GM12878 (cell line): ENCODE measurements at regions of chr6 and their contacts with region 1.

Region 1: DNA sequence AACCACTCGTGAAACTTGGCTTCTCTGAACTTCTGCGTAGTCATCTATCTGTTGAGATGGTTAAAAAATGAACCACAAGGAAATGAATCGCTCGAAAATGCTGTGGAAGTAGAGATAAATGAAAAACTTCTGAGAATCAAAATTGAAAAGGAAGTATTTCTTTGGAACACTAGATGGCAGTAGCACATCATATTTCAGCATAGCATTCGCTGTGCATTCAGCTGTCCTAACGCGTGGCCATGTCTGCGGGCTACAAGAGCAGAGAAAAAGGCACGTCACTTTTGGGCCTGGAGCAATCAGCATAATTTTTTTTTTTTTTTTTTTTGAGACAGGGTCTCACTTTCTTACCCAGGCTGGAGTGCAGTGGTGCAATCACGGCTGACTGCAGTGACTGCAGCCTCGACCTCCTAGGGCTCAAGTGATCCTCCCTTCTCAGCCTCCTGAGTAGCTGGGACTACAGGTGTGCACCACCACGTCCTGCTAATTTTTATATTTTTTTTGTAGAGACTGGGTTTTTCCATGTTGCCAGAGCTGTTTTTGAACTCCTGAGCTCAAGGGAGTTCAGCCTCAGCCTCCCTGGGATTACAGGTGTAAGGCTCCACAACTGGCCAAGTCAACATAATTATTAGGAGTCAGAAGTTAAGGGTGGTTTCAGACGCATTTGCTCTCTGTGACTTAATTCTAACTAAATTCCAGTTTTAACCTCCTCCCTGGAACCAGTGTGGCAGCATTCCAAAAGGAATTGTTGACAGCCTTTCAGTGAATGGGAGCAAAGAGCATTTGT is 8.8 kb upstream of the PERP start:
- DNase-seq: peak; percentile 33
- ATAC-seq: peak; percentile 97
- H3K4me3 ChIP-seq: no peak overlapping the region
- H3K27ac ChIP-seq: no peak overlapping the region
- H3K4me1 ChIP-seq: no peaks in the 10 kb centered on the region
- H3K27me3 ChIP-seq: peaks cover 0 to 2% of the 10 kb centered on the region in 2 experiments; a peak in 1 of 4 replicates
- CTCF ChIP-seq: peak; percentile 53 to 86 (median 64); a peak in 5 of 6 replicates
- EP300 ChIP-seq: no peak
- POLR2A ChIP-seq: no peak
- RAD21 ChIP-seq: peak; percentile 82

Region 2: GRCh38 chr6:138012682-138013081 is 103.4 kb before region 1 on chr6:
- CTCF ChIA-PET with region 1: interaction called, 19 read pairs
- POLR2A ChIA-PET with region 1: no interaction called
- RAD21 ChIA-PET with region 1: interaction called, 5 read pairs
- SMC1A ChIA-PET with region 1: interaction called, 3 read pairs
- in situ Hi-C with region 1: no loop called
- intact Hi-C with region 1: no loop called
- DNase-seq: no peak
- ATAC-seq: no peak
- H3K4me3 ChIP-seq: no peak overlapping the region
- H3K27ac ChIP-seq: no peak overlapping the region
- H3K4me1 ChIP-seq: no peaks in the 10 kb centered on the region
- H3K27me3 ChIP-seq: no peaks in the 10 kb centered on the region
- CTCF ChIP-seq: no peak
- EP300 ChIP-seq: no peak
- POLR2A ChIP-seq: no peak
- RAD21 ChIP-seq: no peak

Region 3: DNA sequence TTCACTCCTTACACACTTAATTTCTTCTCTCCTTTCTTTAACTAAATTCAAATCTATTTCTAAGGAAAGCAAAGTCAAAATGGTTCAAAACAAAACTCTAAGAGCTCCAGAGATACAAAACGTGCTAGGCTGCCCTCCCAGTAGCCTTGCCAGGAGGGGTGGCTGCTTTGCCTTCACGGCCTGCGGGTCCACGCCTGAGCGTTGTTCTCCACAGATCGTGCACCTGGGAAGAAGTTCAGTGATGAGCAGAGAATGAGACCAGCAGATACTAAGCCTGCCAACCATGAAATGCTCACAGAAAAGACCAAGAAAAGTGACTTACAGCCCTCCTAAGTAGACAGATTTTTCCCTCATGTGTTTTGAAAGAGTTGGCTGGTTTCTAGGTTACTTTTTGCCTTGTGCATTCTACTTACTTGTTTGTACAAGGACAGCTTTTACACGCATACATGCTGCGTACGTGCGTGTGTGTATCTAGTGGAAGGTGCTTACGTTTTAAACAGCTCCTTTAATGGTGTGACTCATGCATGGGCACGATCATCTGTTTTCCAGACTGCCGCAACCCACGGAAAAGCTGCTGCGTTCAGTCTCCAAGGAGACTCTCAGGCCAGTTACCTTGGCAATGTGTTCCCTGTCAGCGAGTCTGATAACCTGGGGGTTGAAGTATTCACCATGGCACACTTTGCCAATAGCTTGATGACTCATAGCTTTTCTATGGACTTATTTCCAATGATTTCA is 134.6 kb after region 1 on chr6:
- CTCF ChIA-PET with region 1: no interaction called
- POLR2A ChIA-PET with region 1: no interaction called
- RAD21 ChIA-PET with region 1: no interaction called
- SMC1A ChIA-PET with region 1: no interaction called
- in situ Hi-C with region 1: no loop called
- intact Hi-C with region 1: no loop called
- DNase-seq: no peak
- ATAC-seq: no peak
- H3K4me3 ChIP-seq: no peak overlapping the region
- H3K27ac ChIP-seq: no peak overlapping the region
- H3K4me1 ChIP-seq: no peaks in the 10 kb centered on the region
- H3K27me3 ChIP-seq: peaks cover 0 to 2% of the 10 kb centered on the region in 2 experiments; a peak in 1 of 4 replicates
- CTCF ChIP-seq: no peak
- EP300 ChIP-seq: no peak
- POLR2A ChIP-seq: no peak
- RAD21 ChIP-seq: no peak

Region 4: DNA sequence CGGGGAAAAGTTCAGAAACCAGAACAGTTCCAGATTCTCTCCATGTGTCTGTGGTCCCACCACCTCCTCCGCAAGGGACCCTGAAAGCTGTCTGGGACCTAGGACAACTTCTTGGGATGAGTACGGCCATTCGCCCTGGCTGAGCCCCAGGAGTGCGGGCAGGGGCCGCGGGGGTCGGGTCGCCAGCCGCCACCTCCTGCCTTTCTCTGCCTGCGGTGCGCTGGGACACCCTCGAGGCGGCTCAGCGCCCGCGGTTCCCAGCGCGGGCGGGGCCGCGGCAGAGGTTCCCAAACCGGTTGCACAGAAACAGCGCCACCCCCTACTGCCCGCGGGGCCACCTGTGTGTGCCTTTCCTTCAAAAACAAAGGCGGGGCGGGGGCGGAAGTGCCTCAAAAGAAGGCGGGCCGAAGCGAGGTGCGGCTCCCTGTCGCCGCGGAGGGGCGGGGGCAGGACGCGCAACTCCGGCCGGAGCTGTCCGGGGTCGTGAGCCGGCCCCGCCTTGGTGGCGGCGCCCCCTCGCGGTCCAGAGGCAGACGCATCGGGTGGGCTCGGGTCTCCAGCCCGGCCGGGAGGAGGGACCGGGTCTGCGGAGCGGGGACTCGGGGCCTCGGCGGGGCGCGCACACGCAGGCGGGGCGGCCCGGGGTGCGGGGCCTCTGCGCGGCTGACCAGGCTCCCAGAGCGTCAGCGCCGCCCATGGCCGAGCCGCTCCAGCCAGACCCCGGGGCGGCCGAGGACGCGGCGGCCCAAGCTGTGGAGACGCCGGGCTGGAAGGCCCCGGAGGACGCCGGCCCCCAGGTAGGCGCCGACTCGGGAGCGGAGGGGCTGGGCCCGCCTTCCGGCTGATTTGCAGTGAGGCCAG is 288.0 kb after region 1 on chr6 and contains the start of gene HEBP2:
- CTCF ChIA-PET with region 1: interaction called, 24 read pairs
- POLR2A ChIA-PET with region 1: no interaction called
- RAD21 ChIA-PET with region 1: interaction called, 5 read pairs
- SMC1A ChIA-PET with region 1: interaction called, 5 read pairs
- in situ Hi-C with region 1: no loop called
- intact Hi-C with region 1: loop called (anchors 1 kb)
- DNase-seq: peak; percentile 65
- ATAC-seq: peak; percentile 91
- H3K4me3 ChIP-seq: peak within 1 kb of the TSS; percentile 87
- H3K27ac ChIP-seq: peak within 1 kb of the TSS; percentile 61
- H3K4me1 ChIP-seq: peaks cover 3% of the 10 kb centered on the region; the same call in 1 of the 2 replicates
- H3K27me3 ChIP-seq: no peaks in the 10 kb centered on the region
- CTCF ChIP-seq: peak; percentile 39 to 44 (median 40); a peak in 5 of 6 replicates
- EP300 ChIP-seq: no peak
- POLR2A ChIP-seq: peak; percentile 78
- RAD21 ChIP-seq: peak; percentile 34; the same call in 1 of the 2 replicates
- polyA plus RNA-seq, gene HEBP2: 3.8 to 17.2 TPM

Region 5: DNA sequence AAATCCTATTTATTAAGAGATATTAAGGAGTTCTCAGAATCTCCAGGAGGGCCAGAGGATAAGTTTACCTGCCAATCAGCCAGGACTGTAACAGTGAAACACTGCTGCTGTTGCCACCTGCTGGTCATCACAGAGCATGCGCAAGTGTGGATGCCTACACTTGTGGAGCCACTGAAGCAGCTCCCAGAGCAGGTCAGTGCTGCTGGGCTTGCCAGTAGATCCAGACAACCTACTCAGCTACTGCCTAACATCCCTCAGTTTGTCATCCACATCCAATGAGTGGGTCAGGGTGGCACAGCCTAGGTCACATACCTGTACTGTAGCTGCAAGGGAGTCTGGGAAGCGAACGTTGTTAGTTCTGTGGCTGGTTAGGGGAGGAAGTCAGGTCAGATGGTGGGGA is 401.6 kb after region 1 on chr6:
- CTCF ChIA-PET with region 1: interaction called, 97 read pairs
- POLR2A ChIA-PET with region 1: no interaction called
- RAD21 ChIA-PET with region 1: interaction called, 5 read pairs
- SMC1A ChIA-PET with region 1: interaction called, 6 read pairs
- in situ Hi-C with region 1: loop called (anchors 5 kb)
- intact Hi-C with region 1: loop called (anchors 2 kb)
- DNase-seq: no peak
- ATAC-seq: peak; percentile 77
- H3K4me3 ChIP-seq: no peak overlapping the region
- H3K27ac ChIP-seq: no peak overlapping the region
- H3K4me1 ChIP-seq: no peaks in the 10 kb centered on the region; the same call in 1 of the 2 replicates
- H3K27me3 ChIP-seq: 0 out of 4 replicates have a peak, but pooled peaks cover 0 to 2% of the 10 kb centered on the region in 2 experiments
- CTCF ChIP-seq: peak; percentile 47 to 80 (median 75)
- EP300 ChIP-seq: no peak
- POLR2A ChIP-seq: no peak
- RAD21 ChIP-seq: peak; percentile 63

Region 6: GRCh38 chr6:138722425-138723371 is 606.6 kb after region 1 on chr6:
- CTCF ChIA-PET with region 1: no interaction called
- POLR2A ChIA-PET with region 1: no interaction called
- RAD21 ChIA-PET with region 1: no interaction called
- SMC1A ChIA-PET with region 1: no interaction called
- in situ Hi-C with region 1: no loop called
- intact Hi-C with region 1: no loop called
- DNase-seq: no peak
- ATAC-seq: peak; percentile 68
- H3K4me3 ChIP-seq: no peak overlapping the region
- H3K27ac ChIP-seq: no peak overlapping the region
- H3K4me1 ChIP-seq: no peaks in the 10 kb centered on the region
- H3K27me3 ChIP-seq: no peaks in the 10 kb centered on the region
- CTCF ChIP-seq: no peak
- EP300 ChIP-seq: peak; percentile 37 to 69; a peak in 3 of 4 replicates
- POLR2A ChIP-seq: no peak
- RAD21 ChIP-seq: no peak